ENCODE measurements at regions of chr17 and their contacts with region 1.

Region 1: GRCh38 chr17:1039511-1040215 is 42.7 kb downstream of the TIMM22 start:
- DNase-seq: peak; percentile 82 to 83
- ATAC-seq: peak; percentile 63 to 79 (median 74)
- H3K4me3 ChIP-seq: peak overlapping the region in 9 of 10 donors; percentile 9 to 34 (median 25)
- H3K27ac ChIP-seq: peak overlapping the region; percentile 80 to 98 (median 90)
- H3K4me1 ChIP-seq: peaks cover 36 to 83% (median 65%) of the 10 kb centered on the region in 9 donors
- H3K27me3 ChIP-seq: no peaks in the 10 kb centered on the region
- CTCF ChIP-seq: no peak

Region 2: DNA sequence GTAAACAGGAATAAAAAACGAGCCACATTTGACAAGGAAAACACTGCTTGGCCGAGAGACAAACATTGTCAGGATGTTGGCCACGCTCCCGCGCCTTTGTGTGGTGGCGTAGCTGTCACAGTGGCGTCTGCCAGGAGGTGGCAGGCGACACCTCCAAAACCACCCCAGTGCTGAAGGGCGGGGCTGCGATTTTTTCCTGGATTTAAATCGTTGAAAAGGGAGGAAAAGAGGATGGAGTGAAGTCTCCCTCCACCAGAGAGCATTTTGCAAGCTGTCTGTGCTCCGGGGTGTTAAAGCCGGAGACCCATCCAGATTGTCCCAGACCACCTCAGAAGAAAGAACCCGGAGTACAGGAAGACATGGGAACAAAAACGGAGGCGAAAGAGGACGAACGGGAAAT is 244.8 kb before region 1 on chr17:
- intact Hi-C with region 1: loop called in 1 of 10 experiments (anchors 10 kb)
- DNase-seq: peak; percentile 88 to 89
- ATAC-seq: peak; percentile 40 to 90 (median 78)
- H3K4me3 ChIP-seq: peak overlapping the region in 9 of 10 donors; percentile 27 to 53 (median 43)
- H3K27ac ChIP-seq: peak overlapping the region in 9 of 10 donors; percentile 25 to 71 (median 55)
- H3K4me1 ChIP-seq: peaks cover 0 to 36% (median 15%) of the 10 kb centered on the region in 9 donors
- H3K27me3 ChIP-seq: no peaks in the 10 kb centered on the region
- CTCF ChIP-seq: peak; percentile 85 to 97 (median 86)

Region 3: DNA sequence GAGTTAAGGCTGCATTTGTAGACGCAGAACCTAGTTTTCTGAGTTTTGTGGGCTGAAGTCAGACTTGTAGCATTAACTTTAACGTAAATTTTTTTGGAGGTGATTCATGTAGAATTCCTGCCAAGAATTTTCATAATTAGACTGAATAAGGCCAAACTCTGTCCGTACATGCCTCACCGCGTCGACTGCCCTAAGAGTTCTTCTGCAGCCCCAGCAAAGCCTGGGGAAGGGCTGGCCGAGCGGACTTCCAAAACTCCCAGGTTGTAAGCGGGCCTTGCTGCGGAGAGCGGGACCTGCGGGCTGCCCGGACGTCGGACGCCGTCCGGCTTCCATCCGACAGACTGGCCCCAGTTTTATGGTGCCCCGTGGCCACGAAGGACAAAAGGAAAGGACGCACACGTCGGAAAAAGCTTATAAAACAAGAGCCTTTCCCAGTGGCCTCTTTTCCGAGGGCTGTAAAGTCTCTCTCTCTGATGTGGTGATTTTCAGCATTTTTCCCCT is 135.6 kb before region 1 on chr17:
- intact Hi-C with region 1: no loop called
- DNase-seq: no peak
- ATAC-seq: no peak
- H3K4me3 ChIP-seq: no peak overlapping the region
- H3K27ac ChIP-seq: peak overlapping the region in 1 of 10 donors; percentile 40
- H3K4me1 ChIP-seq: peaks cover 5 to 36% (median 23%) of the 10 kb centered on the region in 9 donors
- H3K27me3 ChIP-seq: peaks cover 0 to 23% (median 0%) of the 10 kb centered on the region in 7 donors
- CTCF ChIP-seq: no peak

Region 4: DNA sequence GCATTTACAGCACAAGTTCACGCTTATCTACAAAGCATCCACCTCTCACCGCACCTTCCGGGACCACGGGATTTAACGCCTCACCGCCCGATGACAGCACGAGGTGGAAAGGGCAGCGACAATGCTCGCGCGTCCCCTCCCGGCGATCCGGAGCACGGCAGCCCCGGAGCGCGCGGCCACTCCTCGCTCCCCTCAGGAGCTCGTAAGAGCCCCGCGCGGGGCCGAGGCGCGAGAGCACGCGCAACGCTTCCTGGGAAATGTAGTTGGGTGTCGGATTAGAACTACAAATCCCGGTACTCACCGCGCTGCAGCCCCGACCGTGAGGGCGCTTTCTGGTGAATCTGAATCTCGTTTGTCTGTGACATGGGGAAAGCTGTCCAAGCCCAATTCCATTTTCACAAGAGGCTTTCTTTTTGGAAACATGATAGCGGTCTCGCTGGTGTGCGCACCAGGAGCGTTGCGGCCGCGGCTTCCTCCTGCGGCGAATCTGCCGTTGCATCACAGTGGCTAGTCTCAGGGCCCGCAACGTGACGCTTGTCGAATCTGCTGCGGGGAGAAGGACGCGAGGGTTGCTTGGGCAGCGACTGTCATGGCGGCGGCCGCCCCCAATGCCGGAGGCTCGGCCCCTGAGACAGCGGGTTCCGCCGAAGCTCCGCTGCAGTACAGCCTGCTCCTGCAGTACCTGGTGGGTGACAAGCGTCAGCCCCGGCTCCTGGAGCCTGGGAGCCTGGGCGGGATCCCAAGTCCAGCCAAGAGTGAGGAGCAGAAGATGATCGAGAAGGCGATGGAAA is 42.9 kb before region 1 on chr17 and contains the start of gene TIMM22:
- intact Hi-C with region 1: loop called in 3 of 10 experiments (anchors 2 to 5 kb)
- DNase-seq: peak; percentile 91 to 95
- ATAC-seq: peak; percentile 93 to 97 (median 96)
- H3K4me3 ChIP-seq: peak within 1 kb of the TSS; percentile 74 to 100 (median 92)
- H3K27ac ChIP-seq: peak within 1 kb of the TSS; percentile 83 to 95 (median 93)
- H3K4me1 ChIP-seq: peaks cover 19 to 50% (median 43%) of the 10 kb centered on the region in 9 donors
- H3K27me3 ChIP-seq: no peaks in the 10 kb centered on the region
- CTCF ChIP-seq: peak; percentile 85 to 98 (median 94)
- total RNA-seq, gene TIMM22: 15.0 to 19.8 (median 18.5) TPM

Region 5: GRCh38 chr17:1005361-1005946 is 34.2 kb before region 1 on chr17:
- intact Hi-C with region 1: loop called in 3 of 10 experiments (anchors 5 kb)
- DNase-seq: peak; percentile 65 to 72
- ATAC-seq: peak in 7 of 8 donors; percentile 16 to 53 (median 49)
- H3K4me3 ChIP-seq: no peak overlapping the region
- H3K27ac ChIP-seq: peak overlapping the region; percentile 9 to 90 (median 78)
- H3K4me1 ChIP-seq: peaks cover 55 to 96% (median 88%) of the 10 kb centered on the region in 9 donors
- H3K27me3 ChIP-seq: no peaks in the 10 kb centered on the region
- CTCF ChIP-seq: no peak

Region 6: GRCh38 chr17:1078831-1079561 is 39.3 kb after region 1 on chr17:
- intact Hi-C with region 1: no loop called
- DNase-seq: peak; percentile 61 to 62
- ATAC-seq: peak; percentile 48 to 69 (median 62)
- H3K4me3 ChIP-seq: no peak overlapping the region
- H3K27ac ChIP-seq: peak overlapping the region in 9 of 10 donors; percentile 16 to 79 (median 64)
- H3K4me1 ChIP-seq: peaks cover 7 to 73% (median 51%) of the 10 kb centered on the region in 9 donors
- H3K27me3 ChIP-seq: no peaks in the 10 kb centered on the region
- CTCF ChIP-seq: no peak